Common myeloid progenitor, CD34-positive (primary cell): ENCODE measurements at regions of chr11 and their contacts with region 1.

Region 1: GRCh38 chr11:125433454-125434121 is 62.5 kb downstream of the FEZ1 start:
- DNase-seq: peak; percentile 31 to 43 (median 36)
- H3K4me3 ChIP-seq: no peak overlapping the region
- H3K27ac ChIP-seq: no peak overlapping the region
- H3K4me1 ChIP-seq: no peaks in the 10 kb centered on the region
- H3K27me3 ChIP-seq: peaks cover 0 to 23% (median 13%) of the 10 kb centered on the region in 5 experiments

Region 2: DNA sequence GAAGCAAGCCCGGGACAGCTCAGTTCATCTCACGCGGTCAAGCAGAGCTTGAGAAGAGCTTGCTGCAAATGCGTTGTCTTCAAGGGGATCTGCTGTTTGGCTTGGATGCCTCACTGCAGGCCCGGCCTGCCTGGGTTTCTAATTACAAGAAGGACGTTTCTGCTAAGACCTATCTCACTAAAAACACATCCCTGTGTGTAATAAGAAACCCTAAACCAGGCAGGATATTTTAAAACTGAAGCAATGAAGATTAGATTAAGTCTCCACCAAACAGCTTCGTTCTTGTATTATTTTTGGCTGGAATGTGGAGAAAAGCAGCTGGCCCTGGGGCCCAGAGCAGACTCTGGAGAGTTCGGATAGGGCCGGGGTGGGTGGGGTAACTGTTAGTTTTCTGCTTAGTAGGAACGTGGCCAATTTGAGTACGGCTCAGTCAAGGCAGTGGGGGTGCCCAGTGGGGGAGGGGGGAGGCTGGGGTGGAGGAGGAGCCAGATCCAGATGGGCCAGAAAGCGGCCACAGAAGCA is 263.0 kb before region 1 on chr11:
- CTCF ChIA-PET with region 1: no interaction called
- POLR2A ChIA-PET with region 1: no interaction called
- DNase-seq: no peak
- H3K4me3 ChIP-seq: no peak overlapping the region
- H3K27ac ChIP-seq: no peak overlapping the region
- H3K4me1 ChIP-seq: peaks cover 0 to 14% (median 9%) of the 10 kb centered on the region in 4 experiments
- H3K27me3 ChIP-seq: peaks cover 15 to 96% (median 38%) of the 10 kb centered on the region in 5 experiments

Region 3: DNA sequence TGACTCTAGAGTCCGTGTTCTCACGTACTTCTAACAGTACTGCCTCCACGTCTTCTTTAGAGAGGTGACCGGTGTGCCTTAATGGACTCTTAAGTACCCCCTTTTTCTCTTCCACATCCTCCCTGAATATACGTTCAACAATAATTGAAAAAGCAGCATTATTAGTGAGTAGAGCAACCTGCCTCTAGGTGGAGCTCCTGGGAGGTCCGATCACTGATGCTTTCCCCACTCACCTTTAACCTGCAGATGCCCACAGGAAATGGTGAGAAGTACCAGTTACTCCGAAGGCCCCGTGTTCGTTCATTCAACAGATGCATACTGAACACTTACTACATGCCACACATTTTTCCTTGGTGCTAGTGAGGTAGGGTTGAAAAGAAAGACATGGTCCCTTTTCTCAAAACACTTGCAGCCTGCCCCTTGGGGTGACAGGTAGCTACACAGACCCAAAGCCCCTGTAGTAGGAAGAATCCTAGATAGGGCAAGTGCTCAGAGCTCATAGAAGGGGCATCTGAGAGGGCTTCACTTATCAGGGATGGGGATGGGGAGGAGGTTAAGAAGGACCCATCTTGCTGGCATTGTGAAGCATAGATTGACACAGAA is 10.2 kb before region 1 on chr11:
- CTCF ChIA-PET with region 1: interaction called, 11 read pairs
- POLR2A ChIA-PET with region 1: no interaction called
- DNase-seq: no peak
- H3K4me3 ChIP-seq: no peak overlapping the region
- H3K27ac ChIP-seq: no peak overlapping the region
- H3K4me1 ChIP-seq: no peaks in the 10 kb centered on the region
- H3K27me3 ChIP-seq: peaks cover 0 to 21% (median 15%) of the 10 kb centered on the region in 5 experiments

Region 4: DNA sequence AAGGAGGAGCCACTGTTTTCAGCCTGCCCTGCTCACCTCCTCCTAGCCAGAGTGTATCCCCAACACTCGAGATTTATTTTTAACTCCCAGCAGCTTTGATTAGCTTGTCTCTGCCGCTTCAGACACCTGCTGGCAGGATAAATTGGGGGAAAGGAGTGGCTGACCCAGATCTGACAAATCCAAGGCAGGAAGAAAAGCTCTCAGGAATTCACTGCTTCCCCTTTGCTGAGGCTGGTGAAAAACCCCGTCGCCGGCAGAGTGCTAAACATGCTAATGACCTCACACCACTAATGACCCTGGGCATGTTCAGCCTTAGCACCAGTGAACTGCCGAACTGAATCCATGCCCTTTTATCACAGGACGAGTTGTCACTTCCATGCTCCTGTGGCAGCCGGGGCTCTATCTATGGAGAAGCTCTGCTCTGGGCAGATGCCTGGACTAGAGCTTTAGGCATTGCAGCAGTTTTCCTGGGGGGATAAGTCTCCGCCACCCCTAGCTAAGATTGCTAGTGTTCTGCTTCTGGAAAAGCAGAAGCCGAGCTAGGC is 10.3 kb after region 1 on chr11:
- CTCF ChIA-PET with region 1: interaction called, 10 read pairs
- POLR2A ChIA-PET with region 1: no interaction called
- DNase-seq: no peak
- H3K4me3 ChIP-seq: no peak overlapping the region
- H3K27ac ChIP-seq: no peak overlapping the region
- H3K4me1 ChIP-seq: no peaks in the 10 kb centered on the region
- H3K27me3 ChIP-seq: peaks cover 6 to 47% (median 10%) of the 10 kb centered on the region in 5 experiments

Region 5: GRCh38 chr11:125513705-125514265 is 80.2 kb after region 1 on chr11:
- CTCF ChIA-PET with region 1: no interaction called
- POLR2A ChIA-PET with region 1: no interaction called
- DNase-seq: no peak
- H3K4me3 ChIP-seq: peak overlapping the region in 1 of 7 experiments; percentile 35
- H3K27ac ChIP-seq: peak overlapping the region in 1 of 2 experiments; percentile 80
- H3K4me1 ChIP-seq: peaks cover 5 to 38% (median 15%) of the 10 kb centered on the region in 4 experiments
- H3K27me3 ChIP-seq: peaks cover 0 to 24% (median 2%) of the 10 kb centered on the region in 5 experiments

Region 6: DNA sequence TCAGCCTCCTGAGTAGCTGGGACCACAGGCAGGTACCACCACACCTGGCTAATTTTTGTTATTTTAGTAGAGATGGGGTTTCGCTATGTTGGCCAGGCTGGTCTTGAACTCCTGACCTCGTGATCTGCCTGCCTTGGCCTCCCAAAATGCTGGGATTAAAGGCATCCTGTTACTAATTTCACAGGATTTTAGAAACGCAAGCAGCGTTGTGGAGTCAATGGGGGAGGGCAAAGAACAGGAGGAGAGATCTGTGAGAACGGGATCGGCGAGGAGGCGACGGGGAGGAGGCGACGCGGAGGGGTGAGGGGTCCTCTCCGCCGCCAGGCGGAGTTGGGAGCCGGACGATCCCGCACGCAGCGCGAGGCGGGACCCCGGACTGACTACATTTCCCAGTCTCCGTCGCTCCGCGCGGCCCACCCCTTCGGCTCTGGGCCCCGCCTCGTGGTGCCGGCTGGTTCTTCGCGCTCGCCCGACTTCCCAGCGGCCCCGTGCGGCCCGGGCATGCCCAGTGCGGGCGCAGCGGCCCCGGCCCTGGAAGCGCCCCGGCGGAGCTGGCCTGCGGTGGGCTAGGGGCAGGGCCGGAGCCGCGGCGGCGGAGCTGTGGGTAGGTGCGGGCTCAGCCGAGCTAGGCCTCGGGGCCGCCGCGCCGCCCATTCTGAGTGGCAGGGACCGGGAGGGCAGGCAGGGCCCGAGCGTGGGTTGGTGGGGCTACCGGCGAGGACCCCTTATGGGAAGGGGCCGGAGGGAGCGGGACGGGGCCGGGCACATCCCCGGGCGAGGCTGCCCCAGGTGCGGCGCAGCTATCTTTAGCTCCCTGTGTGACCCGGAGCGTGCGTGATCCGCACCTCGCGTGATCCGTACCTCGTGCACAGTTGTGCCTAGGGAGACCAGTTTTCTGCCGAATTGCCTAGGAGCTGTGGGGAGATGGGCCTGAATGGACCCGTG is 135.7 kb after region 1 on chr11 and contains the start of gene EI24:
- CTCF ChIA-PET with region 1: no interaction called
- POLR2A ChIA-PET with region 1: no interaction called
- DNase-seq: peak; percentile 91 to 93 (median 92)
- H3K4me3 ChIP-seq: peak within 1 kb of the TSS; percentile 57 to 88 (median 74)
- H3K27ac ChIP-seq: peak within 1 kb of the TSS; percentile 58 to 77
- H3K4me1 ChIP-seq: peaks cover 6 to 16% (median 13%) of the 10 kb centered on the region in 4 experiments
- H3K27me3 ChIP-seq: no peaks in the 10 kb centered on the region